AG04449 (cell line): ENCODE measurements at regions of chr10 and their contacts with region 1.

Region 1: GRCh38 chr10:11823122-11823988 is at the start of gene PROSER2:
- DNase-seq: no peak
- H3K4me3 ChIP-seq: peak within 1 kb of the TSS; percentile 63
- CTCF ChIP-seq: no peak

Region 2: GRCh38 chr10:11798845-11799735 is 24.3 kb before region 1 on chr10:
- CTCF ChIA-PET with region 1: interaction called, 16 read pairs
- POLR2A ChIA-PET with region 1: no interaction called
- DNase-seq: no peak
- H3K4me3 ChIP-seq: no peak overlapping the region
- CTCF ChIP-seq: no peak

Region 3: DNA sequence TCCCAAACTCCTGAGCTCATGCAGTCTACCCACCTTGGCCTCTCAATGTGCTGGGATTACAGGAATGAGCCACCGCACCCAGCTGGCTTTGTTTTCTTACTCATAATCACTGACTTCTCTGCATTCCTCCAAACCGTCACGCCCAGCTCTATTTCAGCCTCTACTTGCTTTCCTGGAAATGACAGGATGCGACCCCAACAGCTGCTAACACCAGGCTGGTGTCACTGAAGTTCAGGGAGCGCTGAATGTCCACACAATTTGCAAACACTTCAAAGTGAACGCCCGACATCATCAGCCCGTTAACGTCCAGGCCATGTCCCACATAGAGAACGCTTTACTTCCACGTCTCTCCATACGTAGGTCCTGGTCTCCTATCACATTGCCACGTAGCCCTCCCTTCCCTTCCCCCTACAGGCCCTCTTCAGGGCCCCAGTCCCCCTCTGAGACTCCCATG is 13.0 kb before region 1 on chr10:
- CTCF ChIA-PET with region 1: interaction called, 17 read pairs
- POLR2A ChIA-PET with region 1: no interaction called
- DNase-seq: no peak
- H3K4me3 ChIP-seq: no peak overlapping the region
- CTCF ChIP-seq: no peak

Region 4: GRCh38 chr10:11846542-11846941 is 23.2 kb after region 1 on chr10:
- CTCF ChIA-PET with region 1: interaction called, 10 read pairs
- POLR2A ChIA-PET with region 1: no interaction called
- DNase-seq: no peak
- H3K4me3 ChIP-seq: no peak overlapping the region
- CTCF ChIP-seq: no peak